ENCODE measurements at regions of chr9 and their contacts with region 1.

Region 1: DNA sequence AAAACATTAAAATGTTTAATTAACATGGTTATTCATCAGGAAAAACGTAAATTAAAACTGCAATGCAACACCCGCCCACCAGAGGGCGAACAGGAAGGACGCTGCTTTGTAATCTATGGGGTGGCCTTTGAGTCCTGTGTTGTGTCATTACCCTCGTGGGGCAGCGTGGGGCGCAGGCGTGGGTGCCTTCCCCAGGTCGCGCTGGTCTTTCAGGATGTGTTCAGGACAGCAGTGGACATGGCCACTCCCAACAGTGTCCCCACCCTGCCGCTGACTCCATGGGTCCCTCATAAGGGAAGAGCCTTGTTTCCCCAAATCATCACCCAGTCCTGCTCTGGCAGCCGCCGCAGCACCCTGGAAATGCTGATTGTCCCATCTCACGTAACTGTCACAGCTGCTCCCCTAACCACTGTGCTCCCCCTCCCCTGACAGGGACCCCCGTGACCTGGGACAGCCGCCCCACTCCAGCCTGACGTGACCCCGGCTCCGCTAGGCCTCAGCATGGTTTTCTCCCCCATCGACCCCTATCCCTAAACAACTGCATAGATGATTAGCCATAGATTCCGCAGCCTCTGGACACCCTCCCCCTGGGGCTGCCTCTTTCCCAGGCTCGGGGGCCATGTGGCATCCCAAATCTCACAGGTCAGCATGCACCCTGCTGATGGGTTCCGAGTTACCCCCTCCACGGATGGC is 36.4 kb downstream of the GLT6D1 start:
- DNase-seq: no peak
- H3K4me3 ChIP-seq: no peak overlapping the region
- H3K27me3 ChIP-seq: no peaks in the 10 kb centered on the region
- CTCF ChIP-seq: peak; percentile 79

Region 2: GRCh38 chr9:135588886-135589595 is 13.9 kb before region 1 on chr9:
- CTCF ChIA-PET with region 1: interaction called, 11 read pairs
- POLR2A ChIA-PET with region 1: no interaction called
- DNase-seq: no peak
- H3K4me3 ChIP-seq: no peak overlapping the region
- H3K27me3 ChIP-seq: no peaks in the 10 kb centered on the region
- CTCF ChIP-seq: no peak